ENCODE measurements at regions of chr3 and their contacts with region 1.

Region 1: DNA sequence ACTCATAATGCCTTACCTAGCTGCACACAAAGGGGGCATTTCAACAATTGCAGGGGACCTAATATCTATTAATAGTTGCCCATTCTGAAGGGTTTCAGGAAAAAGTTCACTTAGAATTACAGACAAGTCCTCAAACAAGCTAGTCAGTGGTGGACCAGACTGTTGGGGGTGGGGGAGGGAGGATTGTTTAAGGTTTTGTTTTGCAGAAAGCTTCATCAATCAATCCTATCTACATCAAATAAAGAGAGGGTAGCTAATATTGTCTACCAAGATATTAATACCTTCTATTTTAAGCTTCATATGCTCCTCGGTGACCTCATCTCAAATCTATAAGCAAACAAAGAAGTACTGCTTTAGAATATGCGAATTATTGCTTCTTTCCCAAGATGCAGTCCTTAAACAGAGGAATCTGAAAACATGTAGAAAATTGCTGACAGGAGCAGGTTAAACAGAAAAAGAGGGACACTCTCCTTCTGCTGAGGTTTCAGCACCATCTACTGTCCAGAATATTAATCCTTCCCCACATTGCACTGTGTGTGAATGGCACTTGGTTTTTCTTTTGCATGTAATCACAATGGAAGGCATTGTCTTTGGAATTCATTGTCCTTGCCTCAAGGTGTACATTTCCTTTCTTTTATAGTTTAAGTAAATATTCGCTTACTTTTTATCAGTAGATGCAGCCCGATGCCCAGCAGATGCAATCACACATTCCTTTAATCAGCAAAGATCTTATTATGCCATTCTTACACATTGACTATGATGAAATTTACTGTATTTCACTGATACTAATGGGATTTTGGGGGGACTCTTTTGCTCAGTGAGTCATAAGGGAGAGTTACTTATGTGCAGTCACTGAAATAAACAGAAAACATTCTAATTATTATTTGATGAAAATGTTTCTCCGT is 94.7 kb downstream of the IL5RA start:
- DNase-seq: no peak
- ATAC-seq: peak; percentile 92
- H3K4me3 ChIP-seq: no peak overlapping the region
- H3K27ac ChIP-seq: no peak overlapping the region
- H3K4me1 ChIP-seq: no peaks in the 10 kb centered on the region
- H3K27me3 ChIP-seq: no peaks in the 10 kb centered on the region

Region 2: GRCh38 chr3:1082108-1082507 is 1933.3 kb before region 1 on chr3:
- intact Hi-C with region 1: loop called in 2 of 4 experiments (anchors 5 kb)
- DNase-seq: peak; percentile 25 to 51 (median 31)
- ATAC-seq: no peak
- H3K4me3 ChIP-seq: no peak overlapping the region
- H3K27ac ChIP-seq: no peak overlapping the region
- H3K4me1 ChIP-seq: no peaks in the 10 kb centered on the region
- H3K27me3 ChIP-seq: no peaks in the 10 kb centered on the region

Region 3: DNA sequence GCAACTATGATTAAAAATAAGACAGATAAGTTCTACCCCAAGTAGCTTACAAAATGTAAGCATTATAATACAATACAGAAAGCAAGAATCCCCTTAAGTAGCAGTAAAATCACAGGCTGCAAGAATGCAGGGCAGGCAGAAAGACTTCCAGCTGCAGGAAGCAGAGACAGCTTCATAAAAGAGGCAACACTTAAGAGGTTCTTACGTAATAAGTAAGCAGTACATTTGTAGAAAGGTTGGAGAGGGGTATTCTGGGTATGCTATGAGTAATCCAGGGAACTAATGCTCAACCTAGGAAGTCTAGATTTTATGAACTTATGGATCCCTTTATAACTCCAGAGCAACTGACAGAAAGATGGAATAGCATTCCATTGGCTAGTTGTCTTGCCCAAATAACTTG is 56.9 kb before region 1 on chr3:
- intact Hi-C with region 1: no loop called
- DNase-seq: no peak
- ATAC-seq: no peak
- H3K4me3 ChIP-seq: no peak overlapping the region
- H3K27ac ChIP-seq: no peak overlapping the region
- H3K4me1 ChIP-seq: peaks cover 2% of the 10 kb centered on the region
- H3K27me3 ChIP-seq: no peaks in the 10 kb centered on the region

Measured in right cardiac atrium (tissue), 5 donors.